Activated CD4-positive, alpha-beta T cell treated with anti-CD3 and anti-CD28 coated beads for 36 hours (primary cell): ENCODE measurements at regions of chr5 and their contacts with region 1.

Region 1: DNA sequence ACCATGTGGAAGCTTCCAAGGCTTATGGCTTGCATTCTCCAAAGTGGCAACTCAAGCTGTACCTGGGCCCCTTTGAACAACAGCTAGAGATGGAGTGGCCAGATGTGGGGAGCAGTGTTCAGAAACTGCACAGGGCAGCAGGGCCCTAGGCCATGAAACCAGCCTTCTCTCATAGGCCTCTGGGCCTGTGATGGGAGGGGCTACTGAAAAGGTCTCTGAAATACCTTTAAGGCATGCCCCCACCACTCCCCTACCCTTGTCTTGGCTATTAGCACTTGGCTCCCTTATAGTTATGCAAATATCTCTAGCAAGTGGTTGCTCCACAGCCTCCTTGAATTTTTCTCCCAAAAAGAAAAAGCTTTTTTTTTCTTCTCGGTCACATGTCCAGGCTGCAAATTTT is 1014.6 kb downstream of the DTWD2 start:
- DNase-seq: no peak
- ATAC-seq: no peak
- H3K4me3 Mint-ChIP-seq: no peak overlapping the region
- H3K27ac Mint-ChIP-seq: no peak overlapping the region
- H3K4me1 Mint-ChIP-seq: no peaks in the 10 kb centered on the region
- H3K27me3 Mint-ChIP-seq: no peaks in the 10 kb centered on the region

Region 2: GRCh38 chr5:118768607-118769175 is 794.9 kb after region 1 on chr5:
- CTCF ChIA-PET with region 1: no interaction called
- POLR2A ChIA-PET with region 1: no interaction called
- intact Hi-C with region 1: loop called in 1 of 2 experiments (anchors 5 kb)
- DNase-seq: no peak
- ATAC-seq: no peak
- H3K4me3 Mint-ChIP-seq: no peak overlapping the region
- H3K27ac Mint-ChIP-seq: no peak overlapping the region
- H3K4me1 Mint-ChIP-seq: no peaks in the 10 kb centered on the region
- H3K27me3 Mint-ChIP-seq: peaks cover 3% of the 10 kb centered on the region